Tibial artery (tissue), 4 donors: ENCODE measurements at regions of chr3 and their contacts with region 1.

Region 1: GRCh38 chr3:131802029-131802428 is 232.8 kb downstream of the CPNE4 start:
- DNase-seq: no peak
- H3K4me3 ChIP-seq: no peak overlapping the region
- H3K27ac ChIP-seq: no peak overlapping the region
- H3K4me1 ChIP-seq: no peaks in the 10 kb centered on the region
- H3K27me3 ChIP-seq: no peaks in the 10 kb centered on the region
- CTCF ChIP-seq: no peak

Region 2: GRCh38 chr3:131782751-131783150 is 19.3 kb before region 1 on chr3:
- intact Hi-C with region 1: loop called (anchors 1 kb)
- DNase-seq: no peak
- H3K4me3 ChIP-seq: no peak overlapping the region
- H3K27ac ChIP-seq: no peak overlapping the region
- H3K4me1 ChIP-seq: no peaks in the 10 kb centered on the region
- H3K27me3 ChIP-seq: no peaks in the 10 kb centered on the region
- CTCF ChIP-seq: no peak

Region 3: DNA sequence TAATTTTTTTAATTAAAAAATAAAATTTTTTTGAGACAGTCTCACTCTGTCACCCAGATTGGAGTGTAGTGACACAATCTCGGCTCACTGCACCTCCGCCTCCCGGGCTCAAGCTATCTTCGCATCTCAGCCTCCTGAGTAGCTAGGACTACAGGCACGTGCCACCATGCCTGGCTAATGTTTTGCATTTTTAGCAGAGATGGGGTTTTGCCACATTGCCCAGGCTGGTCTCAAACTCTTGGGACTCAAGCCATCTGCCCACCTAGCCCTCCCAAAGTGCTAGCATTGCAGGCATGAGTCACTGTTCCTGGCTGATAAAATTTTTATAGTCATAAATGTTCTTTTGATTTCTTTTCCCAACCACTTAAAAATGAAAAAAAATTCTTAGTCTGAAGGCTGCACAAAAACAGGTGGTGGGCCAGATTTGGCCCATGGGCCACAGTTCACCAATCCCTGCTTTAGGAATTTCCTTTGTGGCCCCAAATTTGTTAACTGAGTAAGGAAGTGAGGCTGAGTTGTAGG is 867.3 kb after region 1 on chr3:
- intact Hi-C with region 1: no loop called
- DNase-seq: no peak
- H3K4me3 ChIP-seq: no peak overlapping the region
- H3K27ac ChIP-seq: no peak overlapping the region
- H3K4me1 ChIP-seq: no peaks in the 10 kb centered on the region
- H3K27me3 ChIP-seq: no peaks in the 10 kb centered on the region
- CTCF ChIP-seq: no peak